Activated naive CD4-positive, alpha-beta T cell treated with anti-CD3 and anti-CD28 coated beads, Interleukin-2, amount 10 ng/mL, durations not matched to agents 7 days and 5 days (primary cell): ENCODE measurements at regions of chrX and their contacts with region 1.

Region 1: DNA sequence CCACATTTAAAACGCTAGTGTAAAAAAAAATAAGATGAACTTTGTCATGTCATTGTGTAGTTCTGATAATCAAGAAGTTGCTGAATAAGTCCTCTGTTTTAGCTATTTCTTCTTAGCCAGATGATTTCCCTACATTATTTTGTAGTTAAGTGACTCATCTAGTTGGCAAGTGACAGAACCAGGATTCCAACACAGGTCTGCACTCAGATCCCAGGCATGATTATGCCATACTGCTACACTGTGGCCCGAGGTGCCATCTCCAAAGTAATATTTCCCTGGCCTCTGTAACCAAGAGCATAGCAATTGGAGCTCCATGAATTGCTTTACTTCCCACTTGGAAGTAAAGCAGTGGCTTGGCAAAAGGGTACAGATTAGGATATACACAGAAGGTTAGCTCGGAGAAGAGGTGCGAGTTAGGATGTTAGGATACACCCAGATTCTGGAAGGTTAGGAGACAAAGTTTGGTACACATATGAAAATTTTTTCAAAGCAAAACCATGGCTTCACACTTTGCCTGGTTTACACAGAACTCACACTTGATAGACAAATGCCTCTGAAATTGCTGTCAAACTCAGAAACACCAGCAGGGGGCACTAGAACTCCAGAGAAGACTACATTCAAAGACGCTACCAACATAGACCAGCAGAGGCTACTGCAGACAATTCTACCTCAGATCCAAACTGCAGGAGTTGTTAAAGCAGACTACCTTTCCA is 41.4 kb downstream of the SRPX2 start:
- DNase-seq: peak; percentile 69
- H3K4me3 Mint-ChIP-seq: no peak overlapping the region
- H3K27ac Mint-ChIP-seq: no peak overlapping the region
- H3K4me1 Mint-ChIP-seq: no peaks in the 10 kb centered on the region
- H3K27me3 Mint-ChIP-seq: peaks cover 9% of the 10 kb centered on the region

Region 2: DNA sequence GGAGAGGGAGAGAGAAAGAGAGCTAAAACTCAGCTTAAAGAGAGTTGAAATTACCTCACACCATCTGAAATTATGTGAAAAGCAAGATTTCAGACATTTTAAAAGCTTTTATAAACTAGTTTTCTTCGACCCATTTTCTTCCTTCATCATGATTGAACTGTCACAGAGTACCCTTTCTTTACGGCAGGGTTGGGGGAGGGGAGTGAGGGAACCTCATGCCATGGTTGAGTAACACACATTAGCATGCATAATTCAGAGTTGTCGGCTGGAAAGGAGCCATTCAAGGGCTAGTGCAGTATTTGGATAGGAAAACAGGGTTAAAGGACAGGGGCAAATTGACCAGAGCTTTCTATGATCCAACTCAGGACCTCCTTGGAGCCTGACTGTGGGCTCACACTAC is 321.5 kb before region 1 on chrX:
- CTCF ChIA-PET with region 1: no interaction called
- DNase-seq: no peak
- H3K4me3 Mint-ChIP-seq: no peak overlapping the region
- H3K27ac Mint-ChIP-seq: no peak overlapping the region
- H3K4me1 Mint-ChIP-seq: no peaks in the 10 kb centered on the region
- H3K27me3 Mint-ChIP-seq: no peaks in the 10 kb centered on the region

Region 3: DNA sequence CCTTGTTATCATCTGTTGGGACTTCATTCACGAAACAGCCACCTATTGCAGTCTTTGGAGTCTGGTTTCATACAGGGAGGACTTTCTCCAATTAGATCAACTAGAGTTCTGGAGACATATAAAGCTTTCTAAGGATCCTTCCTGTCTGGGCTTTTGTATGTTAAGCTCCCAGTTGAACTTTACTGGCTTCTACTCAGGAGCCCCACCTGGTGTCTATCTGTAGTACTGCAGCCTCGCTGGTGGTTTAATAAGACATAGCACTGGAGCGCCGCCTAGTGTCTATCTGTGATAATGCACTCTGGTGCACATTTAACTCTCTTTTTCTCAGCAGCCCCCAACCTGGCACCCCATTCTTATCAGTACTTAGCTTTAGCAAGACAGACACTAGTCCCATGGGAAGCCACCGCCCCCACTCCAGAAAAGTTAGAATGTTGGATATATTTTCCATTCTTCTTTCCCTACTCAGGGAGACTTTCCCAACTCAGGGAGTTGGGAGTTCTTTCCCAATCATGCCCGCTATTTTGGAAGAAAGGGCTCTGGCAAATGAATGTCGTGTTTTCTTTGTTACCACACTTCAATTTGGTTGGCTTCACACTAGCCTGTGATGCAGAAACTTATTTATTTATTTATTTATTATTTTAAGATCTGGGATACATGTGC is 83.4 kb after region 1 on chrX:
- CTCF ChIA-PET with region 1: interaction called, 56 read pairs
- DNase-seq: peak; percentile 89
- H3K4me3 Mint-ChIP-seq: no peak overlapping the region
- H3K27ac Mint-ChIP-seq: no peak overlapping the region
- H3K4me1 Mint-ChIP-seq: no peaks in the 10 kb centered on the region
- H3K27me3 Mint-ChIP-seq: peaks cover 5% of the 10 kb centered on the region